ENCODE measurements at regions of chr20 and their contacts with region 1.

Region 1: GRCh38 chr20:32830437-32830836 is 10.7 kb downstream of the MAPRE1 start:
- DNase-seq: no peak
- ATAC-seq: no peak
- H3K4me3 ChIP-seq: no peak overlapping the region
- H3K27ac ChIP-seq: no peak overlapping the region
- H3K4me1 ChIP-seq: no peaks in the 10 kb centered on the region
- H3K27me3 ChIP-seq: no peaks in the 10 kb centered on the region
- CTCF ChIP-seq: no peak
- EP300 ChIP-seq: no peak
- POLR2A ChIP-seq: no peak
- RAD21 ChIP-seq: no peak

Region 2: GRCh38 chr20:32858701-32859372 is 28.4 kb after region 1 on chr20 and contains the start of gene EFCAB8:
- CTCF ChIA-PET with region 1: no interaction called
- POLR2A ChIA-PET with region 1: no interaction called
- in situ Hi-C with region 1: no loop called
- intact Hi-C with region 1: loop called (anchors 1 kb)
- DNase-seq: no peak
- ATAC-seq: peak; percentile 66
- H3K4me3 ChIP-seq: no peak within 1 kb of the TSS
- H3K27ac ChIP-seq: no peak within 1 kb of the TSS
- H3K4me1 ChIP-seq: no peaks in the 10 kb centered on the region
- H3K27me3 ChIP-seq: no peaks in the 10 kb centered on the region
- CTCF ChIP-seq: no peak
- EP300 ChIP-seq: no peak
- POLR2A ChIP-seq: no peak
- RAD21 ChIP-seq: no peak
- total RNA-seq, gene EFCAB8: 0.22 TPM in 1 of 2 replicates, not detected in the other

Measured in HepG2 (cell line).